Activated CD4-positive, alpha-beta T cell treated with anti-CD3 and anti-CD28 coated beads for 36 hours (primary cell): ENCODE measurements at regions of chrX and their contacts with region 1.

Region 1: DNA sequence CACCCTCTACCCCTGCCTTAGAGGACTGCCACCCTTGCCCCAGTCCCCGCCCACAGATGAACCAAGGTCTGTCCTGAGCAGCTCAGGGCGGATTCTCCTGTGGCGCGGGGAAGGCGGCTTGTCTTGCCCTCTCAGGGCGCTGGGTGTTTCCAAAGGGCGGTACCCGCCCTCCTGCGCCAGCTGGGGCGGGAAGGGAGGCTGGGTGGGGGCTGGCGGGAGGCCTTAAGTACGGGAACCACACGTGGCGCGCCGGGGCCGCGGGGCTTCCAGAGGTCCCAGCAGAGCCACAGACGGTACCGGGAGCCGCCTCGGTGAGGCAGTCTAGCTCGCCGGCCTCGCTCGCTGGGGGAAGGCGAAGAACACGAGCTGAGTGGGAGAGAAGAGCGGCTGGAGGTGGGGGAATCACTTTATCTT is 361.1 kb downstream of the MID1IP1 start:
- DNase-seq: peak; percentile 73
- ATAC-seq: peak; percentile 68
- H3K4me3 Mint-ChIP-seq: peak overlapping the region; percentile 53
- H3K27ac Mint-ChIP-seq: peak overlapping the region; percentile 59
- H3K4me1 Mint-ChIP-seq: peaks cover 51% of the 10 kb centered on the region
- H3K27me3 Mint-ChIP-seq: no peaks in the 10 kb centered on the region

Region 2: DNA sequence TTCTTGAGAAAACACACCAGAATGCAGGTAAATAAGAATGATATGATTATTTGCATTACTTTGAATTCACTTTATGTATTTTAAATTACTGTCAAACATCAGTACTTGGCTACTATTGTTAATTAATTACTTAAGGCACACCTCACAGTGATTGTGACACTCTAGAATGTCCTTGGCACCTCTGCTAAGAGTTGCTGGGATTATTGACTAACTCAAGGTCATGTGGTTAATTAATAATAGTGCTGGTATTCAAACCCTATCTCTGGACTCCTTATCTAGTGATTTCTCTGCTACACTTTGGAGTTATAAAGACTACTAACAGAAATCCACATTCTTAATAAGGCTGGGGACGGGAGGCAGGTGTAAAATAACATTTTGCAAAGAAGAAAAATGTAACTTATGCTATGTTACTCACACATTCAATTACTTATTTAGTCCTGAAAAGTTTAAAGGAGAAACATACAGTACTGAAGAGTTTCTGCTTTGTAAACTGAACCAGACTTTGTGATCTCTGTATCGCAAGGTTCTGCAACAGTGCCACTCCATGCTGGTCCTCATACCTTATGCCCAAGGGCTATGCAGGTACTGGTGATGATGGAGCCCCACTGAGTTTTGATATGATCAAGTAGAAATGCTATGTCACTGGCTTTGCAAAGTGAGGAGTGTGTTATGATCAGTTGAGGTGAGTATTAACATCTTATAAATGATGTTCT is 118.3 kb before region 1 on chrX:
- CTCF ChIA-PET with region 1: no interaction called
- POLR2A ChIA-PET with region 1: no interaction called
- intact Hi-C with region 1: no loop called
- DNase-seq: no peak
- ATAC-seq: no peak
- H3K4me3 Mint-ChIP-seq: no peak overlapping the region
- H3K27ac Mint-ChIP-seq: no peak overlapping the region
- H3K4me1 Mint-ChIP-seq: no peaks in the 10 kb centered on the region
- H3K27me3 Mint-ChIP-seq: peaks cover 2% of the 10 kb centered on the region

Region 3: DNA sequence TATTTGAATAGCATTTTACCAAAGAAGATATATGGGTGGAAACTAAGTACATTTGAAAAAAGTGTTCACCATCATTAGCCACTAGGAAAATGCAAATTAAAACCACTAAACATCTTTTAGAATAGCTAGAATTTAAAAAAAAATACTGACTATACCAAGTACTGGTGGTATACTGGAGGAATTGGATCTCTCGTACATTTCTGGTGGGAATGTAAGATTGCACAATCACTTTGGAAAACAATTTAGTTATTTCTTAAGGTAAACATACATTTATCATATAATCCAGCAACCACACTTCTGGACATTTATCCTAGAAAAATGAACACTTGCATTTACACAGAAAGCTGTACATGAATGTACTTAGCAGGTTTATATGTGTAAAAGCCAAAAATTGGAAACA is 57.6 kb before region 1 on chrX:
- CTCF ChIA-PET with region 1: no interaction called
- POLR2A ChIA-PET with region 1: no interaction called
- intact Hi-C with region 1: no loop called
- DNase-seq: no peak
- ATAC-seq: no peak
- H3K4me3 Mint-ChIP-seq: no peak overlapping the region
- H3K27ac Mint-ChIP-seq: no peak overlapping the region
- H3K4me1 Mint-ChIP-seq: no peaks in the 10 kb centered on the region
- H3K27me3 Mint-ChIP-seq: no peaks in the 10 kb centered on the region

Region 4: GRCh38 chrX:39196192-39197102 is 34.1 kb after region 1 on chrX:
- CTCF ChIA-PET with region 1: interaction called, 4 read pairs
- POLR2A ChIA-PET with region 1: interaction called, 6 read pairs
- intact Hi-C with region 1: loop called (anchors 2 to 5 kb)
- DNase-seq: peak; percentile 69
- ATAC-seq: peak; percentile 85
- H3K4me3 Mint-ChIP-seq: peak overlapping the region; percentile 44
- H3K27ac Mint-ChIP-seq: peak overlapping the region; percentile 76
- H3K4me1 Mint-ChIP-seq: peaks cover 47% of the 10 kb centered on the region
- H3K27me3 Mint-ChIP-seq: peaks cover 2% of the 10 kb centered on the region

Region 5: DNA sequence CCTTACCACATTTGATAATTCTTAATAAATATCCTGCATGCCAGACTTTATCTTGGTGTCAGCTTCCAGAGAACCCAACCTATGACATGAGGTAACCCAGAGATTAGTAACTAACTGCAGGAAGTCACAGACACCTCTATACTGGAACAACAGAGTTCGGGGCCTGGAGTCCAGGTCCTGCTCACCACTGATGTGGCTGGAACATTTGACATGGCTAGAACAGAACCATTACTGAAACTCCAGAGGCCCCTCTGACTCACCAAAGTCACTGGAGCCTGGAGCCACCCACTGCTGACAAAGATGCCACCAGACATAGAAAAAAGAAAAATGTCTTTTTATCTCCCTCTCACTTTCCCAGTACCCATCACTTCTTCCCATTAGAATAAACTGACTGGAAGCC is 42.6 kb after region 1 on chrX:
- CTCF ChIA-PET with region 1: no interaction called
- POLR2A ChIA-PET with region 1: no interaction called
- intact Hi-C with region 1: loop called in 1 of 2 experiments (anchors 1 kb)
- DNase-seq: peak; percentile 75
- ATAC-seq: peak; percentile 90
- H3K4me3 Mint-ChIP-seq: peak overlapping the region; percentile 21
- H3K27ac Mint-ChIP-seq: peak overlapping the region; percentile 83
- H3K4me1 Mint-ChIP-seq: peaks cover 55% of the 10 kb centered on the region
- H3K27me3 Mint-ChIP-seq: no peaks in the 10 kb centered on the region

Region 6: GRCh38 chrX:39242187-39242586 is 79.9 kb after region 1 on chrX:
- CTCF ChIA-PET with region 1: interaction called, 13 read pairs
- POLR2A ChIA-PET with region 1: interaction called, 3 read pairs
- intact Hi-C with region 1: loop called (anchors 5 kb)
- DNase-seq: peak; percentile 13
- ATAC-seq: no peak
- H3K4me3 Mint-ChIP-seq: no peak overlapping the region
- H3K27ac Mint-ChIP-seq: no peak overlapping the region
- H3K4me1 Mint-ChIP-seq: peaks cover 29% of the 10 kb centered on the region
- H3K27me3 Mint-ChIP-seq: no peaks in the 10 kb centered on the region

Region 7: GRCh38 chrX:39445336-39445735 is 283.0 kb after region 1 on chrX:
- CTCF ChIA-PET with region 1: no interaction called
- POLR2A ChIA-PET with region 1: no interaction called
- intact Hi-C with region 1: loop called (anchors 10 kb)
- DNase-seq: peak; percentile 65
- ATAC-seq: no peak
- H3K4me3 Mint-ChIP-seq: no peak overlapping the region
- H3K27ac Mint-ChIP-seq: peak overlapping the region; percentile 34
- H3K4me1 Mint-ChIP-seq: peaks cover 54% of the 10 kb centered on the region
- H3K27me3 Mint-ChIP-seq: no peaks in the 10 kb centered on the region